B cell (primary cell): ENCODE measurements at regions of chr15 and their contacts with region 1.

Region 1: GRCh38 chr15:58957101-58957973 is 23.9 kb upstream of the SLTM start:
- DNase-seq: peak; percentile 83
- ATAC-seq: peak; percentile 98
- H3K4me3 ChIP-seq: no peak overlapping the region
- H3K4me3 Mint-ChIP-seq: no peak overlapping the region
- H3K27ac ChIP-seq: no peak overlapping the region
- H3K27ac Mint-ChIP-seq: peak overlapping the region; percentile 64
- H3K4me1 ChIP-seq: peaks cover 3 to 7% of the 10 kb centered on the region in 2 donors
- H3K4me1 Mint-ChIP-seq: peaks cover 5% of the 10 kb centered on the region
- H3K27me3 ChIP-seq: no peaks in the 10 kb centered on the region
- H3K27me3 Mint-ChIP-seq: no peaks in the 10 kb centered on the region
- CTCF ChIP-seq: peak; percentile 83

Region 2: GRCh38 chr15:58909616-58910015 is 47.7 kb before region 1 on chr15:
- CTCF ChIA-PET with region 1: no interaction called
- POLR2A ChIA-PET with region 1: no interaction called
- intact Hi-C with region 1: no loop called
- DNase-seq: no peak
- ATAC-seq: no peak
- H3K4me3 ChIP-seq: no peak overlapping the region
- H3K4me3 Mint-ChIP-seq: no peak overlapping the region
- H3K27ac ChIP-seq: no peak overlapping the region
- H3K27ac Mint-ChIP-seq: no peak overlapping the region
- H3K4me1 ChIP-seq: peaks cover 0 to 3% of the 10 kb centered on the region in 2 donors
- H3K4me1 Mint-ChIP-seq: peaks cover 24% of the 10 kb centered on the region
- H3K27me3 ChIP-seq: no peaks in the 10 kb centered on the region
- H3K27me3 Mint-ChIP-seq: no peaks in the 10 kb centered on the region
- CTCF ChIP-seq: no peak

Region 3: GRCh38 chr15:59063042-59063441 is 105.7 kb after region 1 on chr15:
- CTCF ChIA-PET with region 1: interaction called, 10 read pairs
- POLR2A ChIA-PET with region 1: no interaction called
- intact Hi-C with region 1: loop called (anchors 5 kb)
- DNase-seq: no peak
- ATAC-seq: no peak
- H3K4me3 ChIP-seq: no peak overlapping the region
- H3K4me3 Mint-ChIP-seq: no peak overlapping the region
- H3K27ac ChIP-seq: no peak overlapping the region
- H3K27ac Mint-ChIP-seq: no peak overlapping the region
- H3K4me1 ChIP-seq: no peaks in the 10 kb centered on the region
- H3K4me1 Mint-ChIP-seq: peaks cover 16% of the 10 kb centered on the region
- H3K27me3 ChIP-seq: no peaks in the 10 kb centered on the region
- H3K27me3 Mint-ChIP-seq: no peaks in the 10 kb centered on the region
- CTCF ChIP-seq: no peak

Region 4: GRCh38 chr15:59138243-59138642 is 180.9 kb after region 1 on chr15:
- CTCF ChIA-PET with region 1: interaction called, 7 read pairs
- POLR2A ChIA-PET with region 1: no interaction called
- intact Hi-C with region 1: loop called (anchors 1 kb)
- DNase-seq: peak; percentile 74
- ATAC-seq: peak; percentile 97
- H3K4me3 ChIP-seq: no peak overlapping the region
- H3K4me3 Mint-ChIP-seq: no peak overlapping the region
- H3K27ac ChIP-seq: no peak overlapping the region
- H3K27ac Mint-ChIP-seq: peak overlapping the region; percentile 33
- H3K4me1 ChIP-seq: no peaks in the 10 kb centered on the region
- H3K4me1 Mint-ChIP-seq: peaks cover 4% of the 10 kb centered on the region
- H3K27me3 ChIP-seq: no peaks in the 10 kb centered on the region
- H3K27me3 Mint-ChIP-seq: no peaks in the 10 kb centered on the region
- CTCF ChIP-seq: peak; percentile 80